Caco-2 (cell line): ENCODE measurements at regions of chr2 and their contacts with region 1.

Region 1: DNA sequence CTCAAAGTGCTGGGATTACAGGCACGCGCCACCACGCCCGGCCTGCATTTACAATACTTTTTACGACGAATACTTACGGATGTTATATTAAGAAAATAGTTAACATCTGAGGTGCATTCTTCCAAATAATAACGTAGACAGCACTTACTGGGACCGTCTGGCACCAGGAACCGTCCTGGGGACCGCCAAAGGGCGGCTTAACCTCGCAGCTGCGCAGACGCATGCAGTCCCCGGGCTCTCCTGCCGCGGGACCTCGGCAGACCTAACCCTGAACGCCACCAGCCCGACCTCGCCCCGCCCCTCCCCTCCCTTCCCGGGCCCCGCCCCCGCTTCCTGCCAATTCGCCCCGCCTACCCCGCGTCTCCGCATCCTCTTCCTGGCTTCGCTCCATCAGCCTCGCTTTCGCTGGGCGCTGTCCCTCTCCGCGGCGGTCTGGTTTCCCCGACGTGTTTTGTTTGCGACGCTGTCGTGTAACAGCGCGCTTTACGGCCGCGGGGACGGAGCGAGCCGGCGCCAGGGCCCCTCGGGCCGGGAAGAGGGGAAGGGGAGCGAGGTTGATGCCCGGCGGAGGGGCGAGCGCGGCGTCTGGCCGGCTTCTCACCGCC is at the start of gene CNOT11:
- DNase-seq: peak; percentile 99 to 100
- H3K4me3 ChIP-seq: peak within 1 kb of the TSS; percentile 66
- H3K4me3 Mint-ChIP-seq: peak within 1 kb of the TSS; percentile 94
- H3K27ac Mint-ChIP-seq: peak within 1 kb of the TSS; percentile 83
- H3K4me1 ChIP-seq: peaks cover 27% of the 10 kb centered on the region
- H3K4me1 Mint-ChIP-seq: peaks cover 43% of the 10 kb centered on the region
- H3K27me3 ChIP-seq: no peaks in the 10 kb centered on the region
- H3K27me3 Mint-ChIP-seq: no peaks in the 10 kb centered on the region
- CTCF ChIP-seq: no peak
- total RNA-seq, gene CNOT11: 110 and 120 TPM in 2 replicates

Region 2: GRCh38 chr2:101012706-101013181 is 239.8 kb before region 1 on chr2:
- CTCF ChIA-PET with region 1: interaction called, 5 read pairs
- POLR2A ChIA-PET with region 1: no interaction called
- intact Hi-C with region 1: loop called (anchors 2 kb)
- DNase-seq: peak in 1 of 2 experiments; percentile 62
- H3K4me3 ChIP-seq: no peak overlapping the region
- H3K4me3 Mint-ChIP-seq: no peak overlapping the region
- H3K27ac Mint-ChIP-seq: peak overlapping the region; percentile 22
- H3K4me1 ChIP-seq: no peaks in the 10 kb centered on the region
- H3K4me1 Mint-ChIP-seq: peaks cover 11% of the 10 kb centered on the region
- H3K27me3 ChIP-seq: no peaks in the 10 kb centered on the region
- H3K27me3 Mint-ChIP-seq: no peaks in the 10 kb centered on the region
- CTCF ChIP-seq: peak; percentile 67 to 85

Region 3: GRCh38 chr2:101036562-101037457 is 215.7 kb before region 1 on chr2:
- CTCF ChIA-PET with region 1: interaction called, 3 read pairs
- POLR2A ChIA-PET with region 1: no interaction called
- intact Hi-C with region 1: loop called (anchors 1 kb)
- DNase-seq: peak in 1 of 2 experiments; percentile 29
- H3K4me3 ChIP-seq: no peak overlapping the region
- H3K4me3 Mint-ChIP-seq: no peak overlapping the region
- H3K27ac Mint-ChIP-seq: peak overlapping the region; percentile 6
- H3K4me1 ChIP-seq: no peaks in the 10 kb centered on the region
- H3K4me1 Mint-ChIP-seq: peaks cover 7% of the 10 kb centered on the region
- H3K27me3 ChIP-seq: no peaks in the 10 kb centered on the region
- H3K27me3 Mint-ChIP-seq: no peaks in the 10 kb centered on the region
- CTCF ChIP-seq: peak; percentile 46 to 67

Region 4: DNA sequence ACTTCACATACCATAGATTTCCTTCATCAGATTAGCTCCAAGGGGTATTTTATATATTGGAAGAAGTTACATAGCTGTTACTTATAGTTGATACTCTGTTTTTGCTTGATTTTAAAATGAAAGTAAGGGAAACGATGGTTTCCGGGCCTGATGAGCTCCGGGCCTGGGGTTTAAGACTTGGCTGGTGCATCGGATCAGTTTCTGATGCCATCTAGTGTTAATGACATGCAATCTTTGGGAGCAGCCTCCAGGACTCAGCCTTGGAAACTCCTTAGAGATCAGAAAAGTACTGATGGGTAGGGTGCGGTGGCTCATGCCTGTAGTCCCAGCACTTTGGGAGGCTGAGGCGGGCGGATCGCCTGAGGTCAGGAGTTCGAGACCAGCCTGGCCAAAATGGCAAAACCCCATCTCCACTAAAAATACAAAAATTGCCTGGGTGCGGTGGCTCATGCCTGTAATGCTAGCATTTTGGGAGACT is 47.0 kb before region 1 on chr2:
- CTCF ChIA-PET with region 1: interaction called, 10 read pairs
- POLR2A ChIA-PET with region 1: no interaction called
- intact Hi-C with region 1: loop called (anchors 2 kb)
- DNase-seq: peak; percentile 68
- H3K4me3 ChIP-seq: no peak overlapping the region
- H3K4me3 Mint-ChIP-seq: no peak overlapping the region
- H3K27ac Mint-ChIP-seq: no peak overlapping the region
- H3K4me1 ChIP-seq: peaks cover 25% of the 10 kb centered on the region
- H3K4me1 Mint-ChIP-seq: peaks cover 17% of the 10 kb centered on the region
- H3K27me3 ChIP-seq: no peaks in the 10 kb centered on the region
- H3K27me3 Mint-ChIP-seq: no peaks in the 10 kb centered on the region
- CTCF ChIP-seq: peak; percentile 35 to 71

Region 5: DNA sequence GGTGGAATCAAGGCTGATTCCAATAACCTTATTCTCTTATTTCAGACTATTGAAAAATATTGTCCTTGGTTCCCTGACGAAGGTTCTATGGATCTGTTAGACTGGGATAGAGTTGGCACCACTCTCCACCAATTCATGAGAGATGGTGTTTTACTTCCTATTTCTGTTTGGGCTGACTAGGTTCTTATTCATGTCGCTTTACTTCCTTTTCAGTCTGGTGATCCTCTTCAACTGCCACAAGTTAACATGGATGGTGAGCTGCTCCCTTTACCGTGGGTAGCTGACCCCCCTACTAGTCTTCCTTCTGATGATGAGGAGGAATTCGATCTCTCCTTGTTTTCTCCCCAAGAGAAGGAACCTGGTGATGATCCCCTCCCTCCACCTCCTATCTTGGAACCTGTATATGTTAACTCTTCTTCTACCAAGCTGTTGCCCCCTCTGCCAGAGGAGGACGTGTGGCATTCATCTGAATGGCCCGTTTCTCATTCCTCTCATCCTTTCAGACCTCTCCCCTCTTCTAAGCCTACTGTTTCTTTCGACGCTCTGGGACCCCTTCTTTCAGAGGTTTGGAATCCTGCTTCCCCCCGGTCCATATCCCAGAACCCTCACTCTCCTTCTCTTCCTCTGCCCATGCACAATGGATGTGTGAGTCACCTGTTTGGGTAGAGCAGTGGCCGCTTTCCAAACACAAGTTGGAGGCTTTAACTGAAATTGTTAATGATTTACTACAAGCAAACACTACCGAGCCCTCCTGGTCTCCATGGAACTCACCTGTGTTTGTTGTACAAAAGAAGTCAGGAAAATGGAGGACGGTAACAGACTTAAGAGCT is 13.4 kb before region 1 on chr2:
- CTCF ChIA-PET with region 1: interaction called, 25 read pairs
- POLR2A ChIA-PET with region 1: interaction called, 14 read pairs
- intact Hi-C with region 1: loop called (anchors 1 kb)
- DNase-seq: peak; percentile 88
- H3K4me3 ChIP-seq: peak overlapping the region; percentile 24
- H3K4me3 Mint-ChIP-seq: peak overlapping the region; percentile 80
- H3K27ac Mint-ChIP-seq: peak overlapping the region; percentile 98
- H3K4me1 ChIP-seq: peaks cover 58% of the 10 kb centered on the region
- H3K4me1 Mint-ChIP-seq: peaks cover 50% of the 10 kb centered on the region
- H3K27me3 ChIP-seq: no peaks in the 10 kb centered on the region
- H3K27me3 Mint-ChIP-seq: no peaks in the 10 kb centered on the region
- CTCF ChIP-seq: no peak

Region 6: GRCh38 chr2:101266027-101266459 is 13.5 kb after region 1 on chr2:
- CTCF ChIA-PET with region 1: interaction called, 5 read pairs
- POLR2A ChIA-PET with region 1: interaction called, 9 read pairs
- intact Hi-C with region 1: loop called (anchors 1 kb)
- DNase-seq: peak; percentile 79 to 86
- H3K4me3 ChIP-seq: no peak overlapping the region
- H3K4me3 Mint-ChIP-seq: peak overlapping the region; percentile 3
- H3K27ac Mint-ChIP-seq: peak overlapping the region; percentile 77
- H3K4me1 ChIP-seq: peaks cover 62% of the 10 kb centered on the region
- H3K4me1 Mint-ChIP-seq: peaks cover 45% of the 10 kb centered on the region
- H3K27me3 ChIP-seq: no peaks in the 10 kb centered on the region
- H3K27me3 Mint-ChIP-seq: no peaks in the 10 kb centered on the region
- CTCF ChIP-seq: no peak

Region 7: DNA sequence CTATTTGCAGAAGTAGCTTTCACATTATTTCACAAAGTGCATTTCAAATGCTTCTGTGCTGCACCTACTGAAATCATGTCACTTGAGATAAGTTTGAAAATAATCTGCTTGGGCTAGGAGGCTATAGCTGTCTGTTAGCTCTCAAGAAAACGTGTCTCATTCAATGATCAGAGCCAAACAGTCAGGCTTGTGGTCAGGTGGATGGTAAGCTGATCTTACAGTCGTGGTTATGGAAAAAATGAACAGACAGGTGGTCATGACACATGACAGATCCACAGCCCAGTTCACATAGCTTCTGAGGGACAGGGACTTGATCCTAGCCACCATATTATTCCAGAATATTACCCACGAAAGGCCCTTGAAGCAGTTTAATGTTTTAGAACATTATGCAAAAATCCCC is 248.9 kb after region 1 on chr2:
- CTCF ChIA-PET with region 1: no interaction called
- POLR2A ChIA-PET with region 1: no interaction called
- intact Hi-C with region 1: no loop called
- DNase-seq: no peak
- H3K4me3 ChIP-seq: no peak overlapping the region
- H3K4me3 Mint-ChIP-seq: no peak overlapping the region
- H3K27ac Mint-ChIP-seq: no peak overlapping the region
- H3K4me1 ChIP-seq: no peaks in the 10 kb centered on the region
- H3K4me1 Mint-ChIP-seq: no peaks in the 10 kb centered on the region
- H3K27me3 ChIP-seq: no peaks in the 10 kb centered on the region
- H3K27me3 Mint-ChIP-seq: no peaks in the 10 kb centered on the region
- CTCF ChIP-seq: no peak